Common myeloid progenitor, CD34-positive (primary cell): ENCODE measurements at regions of chr5 and their contacts with region 1.

Region 1: GRCh38 chr5:150846654-150847333 is 473 bp downstream of the IRGM start:
- DNase-seq: peak; percentile 92 to 96 (median 95)
- H3K4me3 ChIP-seq: peak overlapping the region in 5 of 7 experiments; percentile 15 to 62 (median 45)
- H3K27ac ChIP-seq: no peak overlapping the region
- H3K4me1 ChIP-seq: peaks cover 0 to 13% (median 9%) of the 10 kb centered on the region in 4 experiments
- H3K27me3 ChIP-seq: no peaks in the 10 kb centered on the region

Region 2: DNA sequence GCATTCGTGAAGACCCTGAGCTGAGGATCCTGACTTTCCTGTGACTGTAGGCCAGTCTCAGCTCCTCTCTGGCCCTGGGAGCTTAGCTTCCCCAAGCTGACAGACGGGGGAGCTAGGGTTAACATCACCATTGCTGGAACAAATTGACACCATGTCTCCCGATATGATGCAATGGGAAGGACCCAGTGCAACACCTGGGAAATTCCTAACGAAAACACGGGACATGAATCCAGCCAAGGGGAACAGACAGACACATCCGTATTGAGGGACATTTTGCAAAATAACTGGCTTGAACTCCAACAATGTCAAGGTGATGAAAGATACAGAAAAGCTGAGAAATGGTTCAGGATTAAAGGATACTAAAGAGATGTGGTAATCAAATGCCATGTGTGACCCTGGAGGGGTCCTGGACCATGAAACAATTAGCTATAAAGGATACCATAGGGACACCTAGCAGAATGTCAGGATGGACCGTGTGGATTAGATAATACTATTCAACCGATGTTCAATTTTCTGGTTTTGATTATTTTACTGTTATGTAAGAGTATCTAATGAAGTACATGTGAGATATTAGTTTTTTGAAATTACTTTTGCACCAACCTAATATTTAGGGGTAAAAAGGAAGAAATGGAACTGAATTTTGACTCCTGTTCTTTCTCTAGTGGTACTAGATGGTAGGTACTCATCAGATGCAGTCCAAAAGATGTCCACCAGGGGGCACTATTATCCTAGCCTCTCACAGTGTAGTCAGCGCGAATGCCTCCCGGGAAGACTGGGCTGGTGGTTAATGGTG is 286.2 kb before region 1 on chr5:
- CTCF ChIA-PET with region 1: interaction called, 26 read pairs
- POLR2A ChIA-PET with region 1: no interaction called
- DNase-seq: peak; percentile 87 to 95 (median 88)
- H3K4me3 ChIP-seq: no peak overlapping the region
- H3K27ac ChIP-seq: no peak overlapping the region
- H3K4me1 ChIP-seq: peaks cover 0 to 30% (median 18%) of the 10 kb centered on the region in 4 experiments
- H3K27me3 ChIP-seq: no peaks in the 10 kb centered on the region

Region 3: GRCh38 chr5:150710165-150710564 is 136.6 kb before region 1 on chr5:
- CTCF ChIA-PET with region 1: interaction called, 24 read pairs
- POLR2A ChIA-PET with region 1: no interaction called
- DNase-seq: peak; percentile 35 to 55 (median 46)
- H3K4me3 ChIP-seq: no peak overlapping the region
- H3K27ac ChIP-seq: no peak overlapping the region
- H3K4me1 ChIP-seq: no peaks in the 10 kb centered on the region
- H3K27me3 ChIP-seq: no peaks in the 10 kb centered on the region

Region 4: GRCh38 chr5:150758531-150759333 is 88.1 kb before region 1 on chr5 and contains the start of gene DCTN4:
- CTCF ChIA-PET with region 1: interaction called, 21 read pairs
- POLR2A ChIA-PET with region 1: no interaction called
- DNase-seq: peak; percentile 98 to 99 (median 99)
- H3K4me3 ChIP-seq: peak within 1 kb of the TSS; percentile 74 to 98 (median 92)
- H3K27ac ChIP-seq: peak within 1 kb of the TSS; percentile 95 to 98
- H3K4me1 ChIP-seq: peaks cover 38 to 58% (median 47%) of the 10 kb centered on the region in 4 experiments
- H3K27me3 ChIP-seq: no peaks in the 10 kb centered on the region

Region 5: DNA sequence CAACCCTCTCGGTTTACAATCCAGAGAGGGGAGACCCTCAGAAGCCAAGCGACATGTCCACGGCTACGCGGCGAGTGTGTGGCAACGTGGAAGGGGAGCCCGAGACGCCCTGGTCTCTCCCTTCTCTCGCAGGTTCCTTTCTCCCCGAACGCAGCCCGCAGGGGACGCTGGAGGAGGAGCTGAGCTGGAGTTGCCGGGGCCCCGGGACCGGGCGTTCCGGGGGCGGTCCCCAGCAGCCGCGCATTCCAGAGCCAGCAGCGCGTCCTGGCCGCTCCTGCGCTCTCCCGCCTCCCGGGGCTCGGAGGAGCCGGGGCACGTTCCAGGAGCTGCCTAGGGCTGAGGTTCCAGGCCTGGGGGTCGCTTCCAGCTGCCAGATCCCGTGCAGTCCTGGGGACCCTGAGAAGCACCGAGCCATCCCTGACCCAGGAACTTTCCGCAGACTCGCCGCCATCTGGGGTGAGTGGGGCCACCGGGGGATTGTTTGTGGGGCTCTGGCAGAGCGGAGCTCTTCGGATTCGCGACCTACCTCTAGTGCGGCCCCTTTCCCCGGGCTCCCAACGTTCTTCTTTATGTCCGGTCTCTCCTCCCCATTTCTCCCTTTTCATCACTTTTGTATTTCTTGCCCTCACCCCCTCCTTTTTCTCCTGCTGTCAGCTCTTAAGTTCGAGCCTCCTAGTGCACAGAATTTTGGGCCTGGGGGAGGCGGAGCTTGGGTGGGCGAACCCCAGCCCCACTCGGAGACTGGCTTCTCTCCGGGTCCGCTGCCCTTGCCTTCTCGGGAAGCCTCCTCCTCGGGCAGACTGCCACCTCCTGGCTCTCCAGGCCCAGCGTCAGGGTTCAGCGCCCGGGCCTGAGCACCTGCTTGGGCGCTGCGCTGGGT is 68.0 kb before region 1 on chr5 and contains the start of gene SMIM3:
- CTCF ChIA-PET with region 1: interaction called, 72 read pairs
- POLR2A ChIA-PET with region 1: interaction called, 3 read pairs
- DNase-seq: peak; percentile 71 to 87 (median 85)
- H3K4me3 ChIP-seq: peak within 1 kb of the TSS; percentile 84 to 94 (median 92)
- H3K27ac ChIP-seq: peak within 1 kb of the TSS; percentile 85 to 93
- H3K4me1 ChIP-seq: peaks cover 34 to 78% (median 70%) of the 10 kb centered on the region in 4 experiments
- H3K27me3 ChIP-seq: no peaks in the 10 kb centered on the region

Region 6: GRCh38 chr5:150789943-150790611 is 56.7 kb before region 1 on chr5:
- CTCF ChIA-PET with region 1: interaction called, 15 read pairs
- POLR2A ChIA-PET with region 1: no interaction called
- DNase-seq: peak; percentile 89 to 98 (median 96)
- H3K4me3 ChIP-seq: peak overlapping the region in 5 of 7 experiments; percentile 11 to 64 (median 42)
- H3K27ac ChIP-seq: peak overlapping the region; percentile 69 to 79
- H3K4me1 ChIP-seq: peaks cover 47 to 68% (median 51%) of the 10 kb centered on the region in 4 experiments
- H3K27me3 ChIP-seq: no peaks in the 10 kb centered on the region

Region 7: GRCh38 chr5:150801117-150801927 is 45.5 kb before region 1 on chr5:
- CTCF ChIA-PET with region 1: interaction called, 19 read pairs
- POLR2A ChIA-PET with region 1: interaction called, 3 read pairs
- DNase-seq: peak in 2 of 3 donors; percentile 62 to 63
- H3K4me3 ChIP-seq: peak overlapping the region in 5 of 7 experiments; percentile 24 to 75 (median 55)
- H3K27ac ChIP-seq: no peak overlapping the region
- H3K4me1 ChIP-seq: peaks cover 0 to 15% (median 8%) of the 10 kb centered on the region in 4 experiments
- H3K27me3 ChIP-seq: no peaks in the 10 kb centered on the region

Region 8: GRCh38 chr5:150862070-150862469 is 15.3 kb after region 1 on chr5:
- CTCF ChIA-PET with region 1: no interaction called
- POLR2A ChIA-PET with region 1: no interaction called
- DNase-seq: no peak
- H3K4me3 ChIP-seq: no peak overlapping the region
- H3K27ac ChIP-seq: no peak overlapping the region
- H3K4me1 ChIP-seq: no peaks in the 10 kb centered on the region
- H3K27me3 ChIP-seq: no peaks in the 10 kb centered on the region